Transverse colon (tissue), 4 donors: ENCODE measurements at regions of chr5 and their contacts with region 1.

Region 1: DNA sequence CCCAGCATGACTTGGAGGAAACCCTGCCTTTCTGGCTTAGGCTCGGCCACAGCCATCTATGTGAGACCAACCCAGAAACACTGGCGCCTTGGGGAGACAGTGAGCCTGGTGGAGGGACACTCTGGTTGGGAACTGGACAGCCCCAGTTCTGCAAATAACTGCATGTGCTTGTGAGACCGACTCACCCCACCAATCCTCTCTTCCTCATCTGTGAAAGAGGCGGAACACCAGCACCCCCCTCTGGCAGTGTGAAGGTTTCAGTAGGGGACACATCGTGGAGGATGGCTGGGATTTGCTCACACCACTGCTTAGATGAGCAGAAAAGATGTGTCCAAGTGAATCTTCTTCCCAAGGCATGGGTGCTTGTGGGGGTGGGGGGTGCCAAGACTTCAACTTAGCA is 43.4 kb upstream of the N4BP3 start:
- DNase-seq: peak; percentile 13
- H3K4me3 ChIP-seq: no peak overlapping the region
- H3K27ac ChIP-seq: no peak overlapping the region
- H3K4me1 ChIP-seq: no peaks in the 10 kb centered on the region
- H3K27me3 ChIP-seq: peaks cover 14% of the 10 kb centered on the region
- CTCF ChIP-seq: no peak
- EP300 ChIP-seq: no peak
- POLR2A ChIP-seq: no peak

Region 2: DNA sequence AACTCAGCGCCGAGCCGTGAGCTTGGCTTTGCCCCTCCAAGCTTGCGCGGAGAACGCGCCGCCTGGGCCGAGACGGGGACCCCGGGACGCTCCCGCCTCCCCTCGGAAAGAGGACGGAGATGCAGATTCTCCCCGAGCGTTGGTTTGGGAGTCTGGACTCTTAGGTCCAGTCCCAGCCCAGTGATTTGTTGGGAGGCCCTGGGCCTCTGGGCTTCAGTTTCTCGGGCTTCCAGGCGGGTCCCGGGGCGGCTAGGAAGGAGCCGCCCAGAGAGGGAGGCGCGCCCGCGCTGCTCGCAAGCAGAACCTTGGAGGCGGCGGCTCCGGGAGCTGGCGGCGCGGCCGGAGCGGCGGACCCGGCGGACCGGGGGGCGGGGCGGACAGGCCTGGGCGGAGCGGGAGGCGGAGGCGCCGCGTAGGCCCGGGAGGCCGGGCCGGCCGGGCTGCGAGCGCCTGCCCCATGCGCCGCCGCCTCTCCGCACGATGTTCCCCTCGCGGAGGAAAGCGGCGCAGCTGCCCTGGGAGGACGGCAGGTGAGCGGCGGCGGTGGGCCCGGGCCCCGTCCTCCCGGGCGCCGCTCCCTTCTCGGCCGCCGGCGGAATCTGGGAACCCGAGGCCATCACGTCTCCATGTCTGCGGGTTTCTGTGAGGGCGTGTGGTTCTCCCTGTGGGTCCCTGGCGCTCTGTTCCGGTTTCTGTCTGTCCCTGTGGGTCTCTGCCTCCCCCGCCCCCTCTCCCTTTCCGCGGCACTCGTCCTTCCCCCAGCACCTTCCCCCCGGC is 470.0 kb before region 1 on chr5 and contains the start of gene B4GALT7:
- in situ Hi-C with region 1: loop called in 1 of 4 experiments (anchors 25 kb)
- intact Hi-C with region 1: no loop called
- DNase-seq: peak; percentile 91
- H3K4me3 ChIP-seq: peak within 1 kb of the TSS; percentile 54 to 98 (median 78)
- H3K27ac ChIP-seq: peak within 1 kb of the TSS; percentile 86 to 96 (median 89)
- H3K4me1 ChIP-seq: peaks cover 0 to 27% (median 16%) of the 10 kb centered on the region in 4 donors
- H3K27me3 ChIP-seq: no peaks in the 10 kb centered on the region
- CTCF ChIP-seq: no peak
- EP300 ChIP-seq: no peak
- POLR2A ChIP-seq: peak; percentile 63
- total RNA-seq, gene B4GALT7: 17.9 to 38.5 (median 27.0) TPM

Region 3: GRCh38 chr5:177982072-177982727 is 87.7 kb before region 1 on chr5:
- in situ Hi-C with region 1: loop called in 1 of 4 experiments (anchors 10 kb)
- intact Hi-C with region 1: no loop called
- DNase-seq: no peak
- H3K4me3 ChIP-seq: no peak overlapping the region
- H3K27ac ChIP-seq: no peak overlapping the region
- H3K4me1 ChIP-seq: no peaks in the 10 kb centered on the region
- H3K27me3 ChIP-seq: peaks cover 69% of the 10 kb centered on the region
- CTCF ChIP-seq: peak in 2 of 5 experiments; percentile 20 to 27
- EP300 ChIP-seq: no peak
- POLR2A ChIP-seq: no peak

Region 4: GRCh38 chr5:178113199-178113787 is 43.4 kb after region 1 on chr5 and contains the start of gene N4BP3:
- in situ Hi-C with region 1: no loop called
- intact Hi-C with region 1: no loop called
- DNase-seq: peak; percentile 79
- H3K4me3 ChIP-seq: peak within 1 kb of the TSS; percentile 28 to 50 (median 38)
- H3K27ac ChIP-seq: peak within 1 kb of the TSS in 3 of 4 donors; percentile 34 to 64 (median 41)
- H3K4me1 ChIP-seq: peaks cover 8 to 46% (median 23%) of the 10 kb centered on the region in 4 donors
- H3K27me3 ChIP-seq: peaks cover 61% of the 10 kb centered on the region
- CTCF ChIP-seq: peak in 1 of 5 experiments; percentile 4
- EP300 ChIP-seq: no peak
- POLR2A ChIP-seq: no peak
- total RNA-seq, gene N4BP3: 0.55 to 2.6 (median 1.2) TPM

Region 5: GRCh38 chr5:178163772-178164735 is 94.1 kb after region 1 on chr5:
- in situ Hi-C with region 1: loop called (anchors 5 to 10 kb)
- intact Hi-C with region 1: no loop called
- DNase-seq: peak; percentile 92
- H3K4me3 ChIP-seq: no peak overlapping the region
- H3K27ac ChIP-seq: no peak overlapping the region
- H3K4me1 ChIP-seq: peaks cover 3 to 9% (median 5%) of the 10 kb centered on the region in 4 donors
- H3K27me3 ChIP-seq: peaks cover 29% of the 10 kb centered on the region
- CTCF ChIP-seq: peak; percentile 96 to 99 (median 99)
- EP300 ChIP-seq: no peak
- POLR2A ChIP-seq: no peak

Region 6: DNA sequence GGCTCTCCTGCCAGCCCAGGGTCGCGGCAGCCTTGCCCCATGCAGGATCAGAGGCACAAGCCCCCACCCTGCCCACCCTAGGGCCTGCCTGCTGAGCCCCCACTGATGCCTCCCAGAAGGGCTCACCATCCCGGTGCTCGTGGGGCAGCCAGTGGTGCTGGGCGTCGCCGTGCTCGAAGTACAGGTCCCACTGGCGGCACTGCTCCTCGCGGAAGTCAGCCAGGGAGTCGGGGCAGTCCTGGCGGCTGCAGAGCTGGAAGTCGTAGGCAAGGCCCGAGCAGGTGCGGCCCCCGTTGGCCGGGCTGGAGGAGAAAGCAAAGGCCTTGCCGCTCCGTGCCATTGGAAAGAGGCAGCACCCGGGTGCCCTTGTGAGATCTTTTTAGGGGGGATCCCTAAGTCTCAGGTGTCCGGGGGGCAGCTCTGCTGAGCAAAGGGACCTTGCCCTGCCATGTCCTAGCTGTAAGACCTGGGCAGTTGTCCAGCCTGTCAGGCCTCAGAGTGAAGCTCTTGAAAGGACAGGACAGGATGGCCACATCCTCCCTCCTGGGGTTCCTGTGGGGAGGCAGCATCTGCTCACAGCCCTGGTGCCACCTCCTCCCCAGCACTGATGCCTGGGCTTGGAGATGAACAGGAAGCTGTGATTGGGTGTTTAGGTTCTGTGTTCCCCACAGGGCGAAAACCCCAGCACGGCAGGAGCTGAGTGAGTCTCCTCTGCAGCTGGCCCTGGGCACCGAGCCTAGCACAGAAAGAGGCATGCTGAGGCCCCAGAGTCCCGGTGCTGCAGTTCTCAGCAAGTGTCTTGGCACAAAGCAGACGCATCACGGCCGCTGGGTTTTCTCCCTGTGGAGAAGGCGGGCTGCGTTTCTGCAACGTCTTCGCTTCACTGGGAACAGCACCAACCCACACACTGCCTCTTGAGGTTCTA is 1068.0 kb after region 1 on chr5:
- in situ Hi-C with region 1: no loop called
- intact Hi-C with region 1: no loop called
- DNase-seq: no peak
- H3K4me3 ChIP-seq: no peak overlapping the region
- H3K27ac ChIP-seq: no peak overlapping the region
- H3K4me1 ChIP-seq: no peaks in the 10 kb centered on the region
- H3K27me3 ChIP-seq: no peaks in the 10 kb centered on the region
- CTCF ChIP-seq: no peak
- EP300 ChIP-seq: no peak
- POLR2A ChIP-seq: no peak